Head of caudate nucleus (tissue), 42 donors: ENCODE measurements at regions of chr10 and their contacts with region 1.

Region 1: GRCh38 chr10:60073781-60074656 is 167.7 kb upstream of the CCDC6 start:
- DNase-seq: no peak

Region 2: DNA sequence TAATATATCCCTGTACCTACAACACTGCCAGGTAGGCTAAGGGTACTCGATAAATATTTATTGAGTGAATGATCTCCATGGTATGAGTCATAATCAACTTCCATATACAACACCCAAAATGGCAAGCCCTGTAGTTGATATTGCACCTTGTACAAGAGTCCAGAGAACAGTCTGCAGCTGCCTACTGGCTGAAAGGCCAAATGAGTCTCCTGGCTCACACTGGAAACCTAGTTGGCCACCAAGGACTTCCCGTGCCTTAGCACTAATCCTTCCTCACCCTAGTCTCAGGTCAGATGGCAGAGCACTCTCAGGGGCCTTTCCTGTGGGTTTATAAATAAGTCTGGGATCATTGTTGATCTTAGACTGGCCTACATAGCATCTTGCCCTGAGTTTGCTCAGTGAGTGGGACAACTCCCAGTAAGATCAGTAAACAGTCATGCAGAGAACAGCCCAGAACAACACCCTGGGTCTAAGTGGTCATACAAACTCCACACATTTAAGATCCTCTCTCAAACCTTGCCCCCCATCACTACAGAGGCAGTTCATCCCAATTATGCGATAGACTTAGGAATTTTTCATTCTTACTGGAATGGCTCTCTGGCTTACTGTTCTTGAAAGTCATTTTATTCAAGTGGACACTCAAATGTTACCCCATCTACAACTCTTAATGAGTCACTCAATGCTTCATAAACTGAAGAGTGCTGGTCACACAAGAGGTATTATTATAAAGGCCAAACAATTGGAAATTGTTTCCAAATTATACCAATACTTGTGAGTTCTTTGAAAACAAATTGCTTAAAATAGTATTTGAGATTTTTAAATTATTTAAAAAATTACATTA is 349.7 kb before region 1 on chr10:
- intact Hi-C with region 1: loop called (anchors 5 kb)
- DNase-seq: no peak

Region 3: GRCh38 chr10:60189861-60190475 is 115.9 kb after region 1 on chr10:
- intact Hi-C with region 1: no loop called
- DNase-seq: no peak

Region 4: DNA sequence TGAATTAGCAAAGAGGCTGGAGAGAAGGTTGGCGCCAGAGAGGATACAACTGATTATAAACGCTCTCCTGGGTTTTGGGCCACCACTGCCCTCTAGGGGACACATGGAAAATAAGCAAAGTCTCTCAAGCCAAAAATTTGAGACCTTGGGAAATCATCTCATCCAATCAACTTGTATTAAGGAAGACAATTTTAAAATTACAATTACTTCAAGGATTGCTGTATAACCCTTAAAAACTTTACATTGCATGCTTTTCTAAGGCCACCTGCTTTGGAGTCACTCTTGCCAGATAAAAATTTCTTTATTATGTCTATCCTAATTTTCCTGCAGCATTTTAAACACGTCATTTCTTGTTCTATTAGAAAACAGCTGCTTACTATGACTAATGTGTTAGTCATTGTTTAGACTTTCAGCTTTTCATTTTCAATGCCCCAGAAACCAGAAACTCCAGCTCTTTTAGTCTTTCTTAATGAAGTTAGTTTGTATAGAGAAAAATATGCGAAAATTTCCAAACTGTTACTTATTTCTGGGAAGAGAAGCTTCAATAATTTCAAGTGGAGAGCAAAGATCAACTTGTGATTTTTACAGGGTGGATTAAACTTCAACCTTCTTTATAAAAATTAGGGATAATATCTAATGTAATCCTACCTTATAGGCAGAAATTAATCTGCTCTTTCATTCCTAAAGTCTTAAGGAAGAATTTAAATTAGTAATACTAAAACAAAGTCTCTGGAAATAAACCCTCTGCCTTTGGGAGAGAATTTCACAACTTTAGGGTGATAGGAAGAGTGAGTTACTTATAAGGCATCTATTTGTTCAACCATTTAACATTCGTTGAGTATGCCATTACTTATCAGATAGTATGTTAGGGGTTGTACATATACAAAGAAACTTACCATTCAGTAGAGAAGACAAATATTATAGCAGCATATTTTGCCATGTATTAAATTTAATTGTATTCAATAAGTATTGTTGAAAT is 890.5 kb after region 1 on chr10:
- intact Hi-C with region 1: no loop called
- DNase-seq: peak; percentile 50 to 92 (median 79)